Sciatic nerve (tissue), 2 donors: ENCODE measurements at regions of chr2 and their contacts with region 1.

Region 1: DNA sequence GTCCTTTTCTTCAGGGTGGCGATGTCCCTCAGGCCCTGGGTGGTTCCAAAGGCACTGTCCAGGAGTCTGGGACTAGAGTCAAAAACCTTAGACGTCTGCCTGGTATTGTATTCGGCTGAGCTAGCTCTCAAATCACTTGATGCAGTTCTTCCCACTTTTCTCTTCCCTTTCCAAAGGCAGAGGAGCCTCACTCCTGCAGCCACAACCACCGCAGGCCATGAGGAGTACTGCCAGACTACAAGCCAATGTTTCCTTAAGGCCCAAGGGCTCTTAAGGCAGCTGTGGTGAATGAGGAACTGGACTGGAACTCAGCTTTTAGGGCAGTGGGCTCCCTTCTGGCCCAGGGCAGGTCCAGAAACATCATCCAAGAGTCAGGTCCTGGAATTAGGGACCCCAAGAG is 360.7 kb downstream of the SPAG16 start:
- DNase-seq: no peak
- ATAC-seq: no peak

Region 2: GRCh38 chr2:212282671-212283261 is 1362.2 kb before region 1 on chr2:
- intact Hi-C with region 1: loop called (anchors 5 kb)
- DNase-seq: no peak
- ATAC-seq: no peak

Region 3: GRCh38 chr2:214519258-214519818 is 874.4 kb after region 1 on chr2:
- intact Hi-C with region 1: no loop called
- DNase-seq: no peak
- ATAC-seq: no peak